Panc1 (cell line): ENCODE measurements at regions of chr6 and their contacts with region 1.

Region 1: DNA sequence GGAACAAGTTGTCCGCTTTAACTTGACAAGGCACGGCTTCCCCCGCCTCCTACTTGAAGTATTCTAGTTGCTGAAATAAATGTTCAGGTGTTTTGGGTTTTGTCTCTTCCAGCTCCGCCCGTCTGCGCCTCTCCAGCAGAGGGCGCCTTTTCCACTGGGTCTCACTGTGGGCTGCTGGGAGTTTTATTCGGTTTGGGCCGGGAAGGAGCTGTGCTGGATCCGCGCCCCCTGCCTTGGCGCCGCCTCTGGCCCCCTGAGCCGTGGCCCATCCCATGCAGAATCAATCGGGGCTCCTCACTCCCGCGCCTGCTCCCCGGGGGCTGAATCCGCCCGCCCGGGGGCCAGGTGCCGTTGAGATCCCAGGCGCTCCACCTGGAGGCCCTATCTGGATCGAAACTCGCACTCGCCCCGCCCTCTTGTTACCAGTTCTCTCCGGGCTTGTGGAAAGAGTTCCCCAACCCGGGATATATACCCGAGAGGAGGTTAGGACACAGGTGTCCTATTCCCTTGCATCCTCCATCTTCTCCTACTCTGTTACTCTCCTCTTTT is 51.0 kb upstream of the TCF21 start:
- DNase-seq: peak; percentile 20
- ATAC-seq: peak; percentile 97
- H3K4me3 ChIP-seq: peak overlapping the region; percentile 46 to 58
- H3K27ac ChIP-seq: no peak overlapping the region
- H3K4me1 ChIP-seq: no peaks in the 10 kb centered on the region
- H3K27me3 ChIP-seq: peaks cover 2% of the 10 kb centered on the region
- CTCF ChIP-seq: peak; percentile 95

Region 2: GRCh38 chr6:133568970-133569889 is 268.6 kb before region 1 on chr6:
- CTCF ChIA-PET with region 1: interaction called, 7 read pairs
- POLR2A ChIA-PET with region 1: no interaction called
- in situ Hi-C with region 1: no loop called
- intact Hi-C with region 1: loop called (anchors 5 kb)
- DNase-seq: peak; percentile 73
- ATAC-seq: peak; percentile 91
- H3K4me3 ChIP-seq: peak overlapping the region; percentile 27 to 57
- H3K27ac ChIP-seq: no peak overlapping the region
- H3K4me1 ChIP-seq: no peaks in the 10 kb centered on the region; the same call in 1 of the 2 replicates
- H3K27me3 ChIP-seq: 0 out of 2 replicates have a peak, but pooled peaks cover 2% of the 10 kb centered on the region
- CTCF ChIP-seq: peak; percentile 90

Region 3: GRCh38 chr6:133796235-133796634 is 41.6 kb before region 1 on chr6:
- CTCF ChIA-PET with region 1: no interaction called
- POLR2A ChIA-PET with region 1: no interaction called
- in situ Hi-C with region 1: no loop called
- intact Hi-C with region 1: no loop called
- DNase-seq: no peak
- ATAC-seq: no peak
- H3K4me3 ChIP-seq: no peak overlapping the region
- H3K27ac ChIP-seq: no peak overlapping the region
- H3K4me1 ChIP-seq: no peaks in the 10 kb centered on the region
- H3K27me3 ChIP-seq: no peaks in the 10 kb centered on the region
- CTCF ChIP-seq: no peak

Region 4: DNA sequence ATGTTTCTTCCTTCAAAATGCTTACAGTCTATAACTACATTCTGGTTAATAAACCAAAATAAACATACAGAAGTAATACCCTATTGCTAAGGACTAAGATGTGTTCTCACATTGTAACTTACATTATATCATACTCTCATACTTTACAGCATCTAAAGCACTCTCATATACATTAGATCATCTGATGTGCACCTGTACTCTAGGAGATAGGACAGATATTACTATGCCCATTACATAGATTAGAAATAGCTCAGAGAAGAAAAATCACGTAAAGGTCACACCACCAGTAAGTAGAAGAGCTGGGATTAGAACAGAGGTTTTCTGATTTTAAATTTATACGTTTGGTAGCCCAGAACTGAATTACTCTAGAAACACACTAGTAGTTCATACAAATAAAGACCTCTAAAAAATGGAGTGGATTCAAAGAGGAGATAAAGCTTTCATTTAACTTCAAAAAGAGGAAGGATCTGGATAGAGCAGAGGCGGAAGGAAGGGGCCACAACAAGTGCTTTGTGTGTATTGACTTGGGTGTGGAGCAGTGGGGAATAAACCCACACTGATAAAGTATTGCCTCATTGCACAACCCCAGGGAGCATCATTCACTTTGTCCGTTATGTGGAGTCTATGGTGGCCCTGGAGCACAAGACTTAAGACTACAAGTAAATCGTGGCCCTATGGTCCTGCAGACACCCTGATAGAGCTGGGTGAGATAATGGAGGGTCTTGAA is 183.7 kb after region 1 on chr6:
- CTCF ChIA-PET with region 1: no interaction called
- POLR2A ChIA-PET with region 1: no interaction called
- in situ Hi-C with region 1: no loop called
- intact Hi-C with region 1: no loop called
- DNase-seq: no peak
- ATAC-seq: no peak
- H3K4me3 ChIP-seq: no peak overlapping the region
- H3K27ac ChIP-seq: peak overlapping the region; percentile 44; the same call in 1 of the 2 replicates
- H3K4me1 ChIP-seq: peaks cover 9% of the 10 kb centered on the region
- H3K27me3 ChIP-seq: no peaks in the 10 kb centered on the region
- CTCF ChIP-seq: no peak